Activated CD8-positive, alpha-beta T cell treated with anti-CD3 and anti-CD28 coated beads for 36 hours (primary cell): ENCODE measurements at regions of chr1 and their contacts with region 1.

Region 1: DNA sequence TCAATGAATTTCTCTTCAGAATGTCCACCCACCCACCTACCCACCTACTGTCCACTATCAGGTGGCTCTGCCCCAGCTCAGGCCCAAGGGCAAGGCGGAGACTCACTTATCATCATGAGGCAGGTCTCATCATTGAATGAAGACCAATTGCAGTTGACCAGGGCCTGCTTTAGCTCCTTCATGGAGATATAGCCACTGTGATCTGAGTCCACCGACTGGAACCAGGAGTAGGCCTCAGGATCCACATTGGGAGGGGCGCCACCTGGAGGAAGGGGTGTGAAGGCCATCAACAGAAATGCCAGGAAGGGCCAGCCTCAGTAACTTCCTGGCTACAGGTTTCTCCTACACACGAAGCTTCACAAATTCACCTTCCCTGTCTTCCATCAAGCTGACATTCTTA is 11.6 kb downstream of the PEF1 start:
- DNase-seq: peak; percentile 59
- ATAC-seq: no peak
- H3K4me3 Mint-ChIP-seq: no peak overlapping the region
- H3K27ac Mint-ChIP-seq: no peak overlapping the region
- H3K4me1 Mint-ChIP-seq: peaks cover 9% of the 10 kb centered on the region
- H3K27me3 Mint-ChIP-seq: no peaks in the 10 kb centered on the region
- CTCF ChIP-seq: peak; percentile 27

Region 2: GRCh38 chr1:31644560-31645273 is 11.7 kb after region 1 on chr1 and contains the start of gene PEF1:
- CTCF ChIA-PET with region 1: interaction called, 9 read pairs
- POLR2A ChIA-PET with region 1: interaction called, 11 read pairs
- intact Hi-C with region 1: no loop called
- DNase-seq: peak; percentile 100
- ATAC-seq: peak; percentile 93
- H3K4me3 Mint-ChIP-seq: peak within 1 kb of the TSS; percentile 99
- H3K27ac Mint-ChIP-seq: peak within 1 kb of the TSS; percentile 100
- H3K4me1 Mint-ChIP-seq: peaks cover 16% of the 10 kb centered on the region
- H3K27me3 Mint-ChIP-seq: no peaks in the 10 kb centered on the region
- CTCF ChIP-seq: no peak
- total RNA-seq, gene PEF1: 58.1 to 61.9 TPM

Region 3: DNA sequence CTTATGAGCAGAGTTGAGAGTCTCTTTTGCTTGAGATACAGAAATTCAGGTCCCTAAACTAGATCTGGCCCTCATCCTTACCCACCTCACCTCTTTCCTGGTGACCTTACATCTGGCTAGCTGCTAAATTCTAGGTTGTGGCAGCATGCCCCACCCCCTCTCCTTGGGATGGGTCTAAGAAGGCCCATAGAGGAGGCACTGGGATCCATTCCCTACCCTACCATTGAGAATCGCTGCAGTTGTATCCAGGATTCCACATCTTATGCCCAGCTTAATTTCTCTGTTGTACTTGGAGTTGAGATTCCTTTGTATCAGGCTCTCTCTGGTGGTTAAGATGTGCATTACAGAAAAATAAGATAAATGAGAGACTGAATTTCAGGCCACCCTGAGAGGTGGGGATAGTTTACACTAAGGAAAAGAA is 430.2 kb after region 1 on chr1:
- CTCF ChIA-PET with region 1: no interaction called
- POLR2A ChIA-PET with region 1: no interaction called
- intact Hi-C with region 1: no loop called
- DNase-seq: no peak
- ATAC-seq: peak; percentile 67
- H3K4me3 Mint-ChIP-seq: no peak overlapping the region
- H3K27ac Mint-ChIP-seq: peak overlapping the region; percentile 68
- H3K4me1 Mint-ChIP-seq: peaks cover 15% of the 10 kb centered on the region
- H3K27me3 Mint-ChIP-seq: no peaks in the 10 kb centered on the region
- CTCF ChIP-seq: peak; percentile 66